ENCODE measurements at regions of chr19 and their contacts with region 1.

Region 1: DNA sequence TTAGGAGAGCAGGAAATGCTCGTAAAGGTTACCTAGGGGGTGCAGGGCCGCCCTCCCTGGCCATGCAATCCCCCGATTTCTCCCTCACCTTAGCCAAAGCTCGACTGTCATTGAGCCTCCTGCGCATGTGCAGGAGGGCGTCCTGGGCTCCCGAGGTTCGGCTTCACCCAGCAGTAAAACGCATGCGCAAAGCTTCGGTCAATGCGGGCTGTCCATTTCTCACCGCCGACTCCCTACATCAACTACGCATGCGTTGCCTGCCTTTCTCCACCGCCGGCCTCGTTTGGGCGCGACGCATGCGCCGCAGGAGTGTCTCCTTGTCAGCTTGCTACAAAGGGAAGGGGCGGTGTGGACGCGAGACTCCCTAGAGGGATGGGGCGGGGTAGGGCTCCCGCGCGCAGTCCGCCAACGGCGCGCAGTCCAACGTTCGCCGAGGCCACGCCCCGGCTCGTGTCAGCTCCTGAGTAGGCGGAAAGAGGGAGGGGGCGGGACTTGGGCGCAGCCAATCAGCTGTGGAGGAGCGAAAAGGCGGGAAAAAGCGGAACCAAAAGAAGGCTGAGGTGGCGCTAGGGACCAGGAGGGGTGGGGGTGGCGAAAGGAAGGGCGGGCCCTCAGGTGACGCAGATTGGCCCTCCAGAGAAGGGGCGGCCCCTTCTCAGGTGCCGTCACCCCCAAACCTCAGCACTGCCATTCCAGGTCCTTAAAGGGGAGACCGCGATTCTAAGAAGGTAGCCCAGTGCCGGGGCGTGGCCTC is at the starts of genes SYNGR4 and TMEM143:
- DNase-seq: peak; percentile 99
- total RNA-seq, gene SYNGR4: not detected
- total RNA-seq, gene TMEM143: 50.2 TPM

Region 2: DNA sequence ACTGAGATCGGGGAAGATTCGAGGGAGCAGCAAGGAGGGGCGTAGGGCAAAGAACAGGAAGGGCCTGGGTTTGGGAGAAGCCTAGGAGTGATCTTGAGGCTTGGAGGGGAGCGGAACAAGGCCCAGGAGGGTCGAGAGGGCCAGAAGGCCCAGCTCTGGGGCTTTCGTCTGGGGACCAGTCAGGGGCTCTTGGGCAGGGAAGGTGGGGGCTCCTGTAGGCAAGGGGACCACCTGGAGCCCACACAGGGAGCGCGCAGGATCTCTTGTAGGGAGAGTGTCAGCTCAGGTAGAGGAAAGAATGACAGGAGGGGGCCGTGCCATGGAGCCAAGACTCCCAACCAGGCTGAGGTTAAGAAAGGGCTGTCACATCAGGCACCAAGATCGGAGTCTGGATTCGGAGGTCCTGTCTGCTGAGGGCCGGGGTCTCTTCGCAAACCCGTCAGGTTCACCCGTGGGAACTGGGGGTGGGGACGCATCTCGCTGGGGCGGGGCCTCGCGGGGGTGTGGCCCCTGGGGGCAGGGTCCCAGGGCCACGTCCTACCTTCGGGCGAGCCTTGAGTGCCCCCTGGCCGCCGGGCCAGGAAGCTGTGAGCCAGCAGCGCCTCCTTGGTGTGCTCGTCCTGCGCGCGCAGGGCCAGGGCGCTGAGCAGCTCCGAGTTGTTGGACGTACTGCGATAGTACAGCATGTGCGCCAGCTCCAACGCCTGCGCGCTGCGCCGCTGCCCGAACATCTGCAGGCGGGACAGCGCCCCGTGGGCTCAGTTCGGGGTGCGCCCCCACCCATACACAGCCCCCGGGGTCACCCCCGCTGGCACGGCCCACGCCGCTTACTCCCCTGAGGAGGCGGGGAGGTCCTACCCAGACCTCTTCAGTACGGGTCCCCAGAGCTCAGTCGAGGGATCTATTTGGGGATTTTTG is 30.3 kb before region 1 on chr19:
- intact Hi-C with region 1: loop called (anchors 2 kb)
- DNase-seq: peak; percentile 96

Region 3: DNA sequence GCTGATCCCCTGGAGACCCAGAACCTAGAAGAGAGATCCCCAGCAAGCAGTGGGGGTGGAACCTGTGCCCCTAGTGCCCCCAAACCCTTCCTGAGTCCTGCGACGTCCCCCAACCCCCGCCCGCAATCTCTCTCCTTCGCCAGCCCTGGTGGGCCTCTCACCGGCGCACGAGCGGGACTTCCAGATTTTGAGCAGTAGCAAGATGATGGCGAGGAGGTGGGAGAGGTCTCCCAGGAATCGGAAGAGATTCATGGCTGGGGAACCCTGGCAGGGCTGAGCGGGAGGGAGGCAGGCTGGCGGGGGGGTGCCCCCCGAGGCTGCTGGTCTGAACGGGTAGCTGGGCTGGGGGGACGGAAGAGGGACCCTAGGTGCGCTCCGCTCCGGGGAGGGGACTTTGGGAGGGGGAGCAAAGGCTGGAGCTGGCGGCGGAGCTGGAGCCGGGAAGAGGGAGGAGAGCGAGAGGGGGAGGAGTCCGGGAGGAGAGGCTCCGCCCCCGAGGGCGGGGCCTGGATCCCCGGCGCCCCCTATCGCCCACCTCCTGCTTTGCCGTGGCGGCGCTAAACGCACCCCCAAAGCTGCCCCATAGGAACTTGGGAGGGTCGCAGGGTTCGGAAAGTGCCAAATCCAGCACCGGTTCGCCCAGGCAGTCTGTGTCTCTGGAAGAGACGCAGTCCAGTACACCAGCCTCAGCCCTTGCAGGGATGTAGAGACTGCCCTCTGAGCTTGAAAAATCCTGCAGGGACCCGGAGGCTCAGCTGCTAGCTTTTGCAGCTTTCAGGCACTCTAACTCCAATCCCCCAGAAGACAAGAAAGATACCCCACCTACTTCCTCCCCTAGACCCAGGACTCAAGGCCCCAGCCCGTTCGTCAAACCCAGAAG is 27.4 kb after region 1 on chr19 and contains the start of gene KDELR1:
- intact Hi-C with region 1: loop called (anchors 2 kb)
- DNase-seq: peak; percentile 91
- total RNA-seq, gene KDELR1: 70.1 TPM

Region 4: DNA sequence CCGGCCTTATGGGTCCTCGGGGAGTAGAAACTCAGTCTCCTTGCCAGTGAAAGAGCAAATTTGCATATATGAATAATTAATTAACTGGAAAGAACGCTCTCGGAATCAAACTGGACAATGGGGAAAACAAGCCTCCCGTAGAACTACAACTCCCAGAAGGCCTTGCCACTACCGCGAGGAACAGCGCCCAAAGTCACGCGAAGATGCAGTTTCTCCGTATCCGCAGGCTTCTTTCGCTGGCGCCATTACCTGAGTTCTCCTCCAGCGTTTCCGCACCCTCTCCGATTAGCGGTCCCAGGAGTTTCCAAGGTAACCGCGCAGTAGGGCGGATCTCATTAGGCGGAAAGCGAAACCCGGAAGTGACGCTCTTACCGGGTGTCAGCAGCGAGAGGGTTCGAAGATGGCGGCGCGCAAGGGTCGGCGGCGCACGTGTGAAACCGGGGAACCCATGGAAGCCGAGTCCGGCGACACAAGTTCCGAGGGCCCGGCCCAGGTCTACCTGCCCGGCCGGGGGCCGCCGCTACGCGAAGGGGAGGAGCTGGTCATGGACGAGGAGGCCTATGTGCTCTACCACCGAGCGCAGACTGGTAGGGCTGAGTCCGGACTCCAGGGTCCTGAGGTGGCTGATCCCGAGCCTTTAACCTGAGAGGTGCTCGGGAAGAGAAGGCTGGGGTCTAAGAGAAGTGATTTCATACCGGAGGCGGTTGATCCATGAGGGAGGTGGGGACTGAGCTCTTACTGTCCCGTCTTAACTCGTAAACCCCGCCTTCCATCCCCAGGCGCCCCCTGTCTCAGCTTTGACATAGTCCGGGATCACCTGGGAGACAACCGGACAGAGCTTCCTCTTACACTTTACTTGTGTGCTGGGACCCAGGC is 81.9 kb after region 1 on chr19 and contains the start of gene GRWD1:
- intact Hi-C with region 1: loop called (anchors 10 kb)
- DNase-seq: peak; percentile 95
- total RNA-seq, gene GRWD1: 17.5 TPM

Measured in cardiac septum (tissue), 1 donor.